GM12878 (cell line): ENCODE measurements at regions of chr15 and their contacts with region 1.

Region 1: GRCh38 chr15:44663409-44664308 is at the start of gene SPG11:
- DNase-seq: peak; percentile 99
- ATAC-seq: peak; percentile 84
- H3K4me3 ChIP-seq: peak within 1 kb of the TSS; percentile 89
- H3K27ac ChIP-seq: peak within 1 kb of the TSS; percentile 98
- H3K4me1 ChIP-seq: peaks cover 32% of the 10 kb centered on the region
- H3K27me3 ChIP-seq: no peaks in the 10 kb centered on the region
- CTCF ChIP-seq: peak; percentile 89 to 99 (median 97); a peak in 5 of 6 replicates
- EP300 ChIP-seq: no peak
- POLR2A ChIP-seq: peak; percentile 96
- RAD21 ChIP-seq: peak; percentile 81
- polyA plus RNA-seq, gene SPG11: 22.1 to 23.6 TPM

Region 2: DNA sequence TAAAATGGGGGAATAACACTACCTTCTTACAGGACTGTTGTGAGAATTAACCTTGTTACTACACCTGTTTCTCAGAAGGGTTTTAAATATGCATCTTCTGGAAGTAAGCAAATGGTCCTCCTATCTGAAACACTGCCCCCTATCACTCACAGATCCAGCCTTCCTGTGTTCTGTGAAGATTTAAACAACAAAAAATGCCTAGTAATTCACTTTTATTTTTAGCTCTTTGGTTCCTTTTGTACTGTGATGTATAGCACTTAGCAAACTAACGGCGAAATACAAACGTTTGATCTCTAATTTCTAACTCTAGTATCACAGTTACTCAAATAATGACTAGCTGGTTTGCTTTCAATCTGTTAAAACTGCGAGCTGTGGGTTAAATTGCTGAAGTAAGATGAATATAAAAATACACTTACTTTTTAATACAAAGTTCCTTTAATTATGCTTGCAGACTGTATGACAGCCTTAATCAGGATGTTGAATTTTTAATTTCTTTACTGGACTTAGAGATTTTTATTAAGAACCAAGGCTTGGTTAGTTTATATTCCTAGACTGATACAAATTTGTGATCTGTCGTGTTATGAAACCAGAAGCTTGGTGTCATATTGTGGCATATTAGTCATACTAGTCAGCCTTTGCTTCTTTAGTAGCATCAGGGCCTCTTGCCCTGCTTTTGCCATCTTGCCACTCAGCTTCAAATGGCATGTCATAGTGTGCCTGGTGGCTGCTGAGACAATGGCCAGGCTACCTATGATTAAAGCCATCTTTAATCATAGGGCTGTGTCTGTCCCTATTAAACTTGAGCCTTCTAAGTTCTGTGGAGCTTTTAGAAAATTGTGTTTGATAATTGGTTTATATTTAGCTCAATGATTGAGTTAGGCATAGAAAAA is 117.5 kb before region 1 on chr15:
- CTCF ChIA-PET with region 1: interaction called, 3 read pairs
- POLR2A ChIA-PET with region 1: interaction called, 12 read pairs
- RAD21 ChIA-PET with region 1: interaction called, 3 read pairs
- SMC1A ChIA-PET with region 1: interaction called, 4 read pairs
- in situ Hi-C with region 1: no loop called
- intact Hi-C with region 1: no loop called
- DNase-seq: peak; percentile 41
- ATAC-seq: peak; percentile 89
- H3K4me3 ChIP-seq: peak overlapping the region; percentile 23; the same call in 1 of the 2 replicates
- H3K27ac ChIP-seq: peak overlapping the region; percentile 70
- H3K4me1 ChIP-seq: peaks cover 7% of the 10 kb centered on the region
- H3K27me3 ChIP-seq: no peaks in the 10 kb centered on the region
- CTCF ChIP-seq: peak; percentile 37 to 47 (median 42); a peak in 5 of 6 replicates
- EP300 ChIP-seq: no peak
- POLR2A ChIP-seq: no peak
- RAD21 ChIP-seq: no peak

Region 3: DNA sequence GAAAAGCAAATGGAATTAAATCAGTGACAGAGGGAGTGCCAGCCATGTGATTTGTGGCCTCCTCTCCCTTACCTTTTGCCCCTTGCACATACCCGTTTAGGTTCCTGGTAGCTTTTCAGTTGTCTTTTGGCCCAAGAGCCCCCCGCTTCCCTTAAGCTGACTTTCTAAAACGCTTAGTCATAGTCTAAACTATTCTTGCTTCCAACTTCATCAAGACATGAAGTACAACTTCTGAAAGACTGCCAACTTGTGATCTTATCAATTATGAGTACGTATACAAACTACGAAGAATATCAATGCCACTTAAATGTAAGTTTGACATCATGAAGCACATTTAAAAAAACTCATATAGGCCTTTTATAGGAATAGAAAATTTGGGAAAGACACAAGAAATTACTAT is 64.8 kb before region 1 on chr15:
- CTCF ChIA-PET with region 1: interaction called, 3 read pairs
- POLR2A ChIA-PET with region 1: interaction called, 3 read pairs
- RAD21 ChIA-PET with region 1: interaction called, 6 read pairs
- SMC1A ChIA-PET with region 1: interaction called, 5 read pairs
- in situ Hi-C with region 1: no loop called
- intact Hi-C with region 1: loop called (anchors 5 kb)
- DNase-seq: no peak
- ATAC-seq: no peak
- H3K4me3 ChIP-seq: no peak overlapping the region
- H3K27ac ChIP-seq: no peak overlapping the region
- H3K4me1 ChIP-seq: peaks cover 7% of the 10 kb centered on the region; the same call in 1 of the 2 replicates
- H3K27me3 ChIP-seq: no peaks in the 10 kb centered on the region
- CTCF ChIP-seq: no peak
- EP300 ChIP-seq: no peak
- POLR2A ChIP-seq: no peak
- RAD21 ChIP-seq: no peak

Region 4: DNA sequence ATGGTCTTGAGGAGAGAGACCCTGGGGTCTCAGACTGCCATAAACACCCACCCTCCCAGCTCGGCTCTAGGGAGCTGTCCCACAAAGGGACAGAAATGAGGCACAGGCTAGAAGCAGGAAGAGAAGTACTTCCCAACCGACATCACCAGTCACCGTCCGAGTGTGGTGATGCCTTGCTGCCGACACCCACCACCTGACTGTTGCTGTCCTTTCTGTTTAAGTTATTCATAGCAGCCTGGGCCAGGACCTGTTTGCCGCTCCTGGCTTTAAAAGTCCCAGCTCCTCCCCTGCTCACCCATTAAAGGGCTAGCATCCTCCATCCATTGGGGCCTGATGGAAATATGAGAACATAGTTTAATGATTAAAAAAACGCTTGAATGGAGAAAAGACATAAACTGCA is 13.0 kb after region 1 on chr15:
- CTCF ChIA-PET with region 1: interaction called, 60 read pairs
- POLR2A ChIA-PET with region 1: interaction called, 60 read pairs
- RAD21 ChIA-PET with region 1: interaction called, 69 read pairs
- SMC1A ChIA-PET with region 1: interaction called, 73 read pairs
- in situ Hi-C with region 1: no loop called
- intact Hi-C with region 1: no loop called
- DNase-seq: no peak
- ATAC-seq: no peak
- H3K4me3 ChIP-seq: no peak overlapping the region
- H3K27ac ChIP-seq: peak overlapping the region; percentile 52; the same call in 1 of the 2 replicates
- H3K4me1 ChIP-seq: peaks cover 53% of the 10 kb centered on the region
- H3K27me3 ChIP-seq: no peaks in the 10 kb centered on the region
- CTCF ChIP-seq: no peak
- EP300 ChIP-seq: no peak
- POLR2A ChIP-seq: peak; percentile 45; the same call in 1 of the 2 replicates
- RAD21 ChIP-seq: no peak

Region 5: DNA sequence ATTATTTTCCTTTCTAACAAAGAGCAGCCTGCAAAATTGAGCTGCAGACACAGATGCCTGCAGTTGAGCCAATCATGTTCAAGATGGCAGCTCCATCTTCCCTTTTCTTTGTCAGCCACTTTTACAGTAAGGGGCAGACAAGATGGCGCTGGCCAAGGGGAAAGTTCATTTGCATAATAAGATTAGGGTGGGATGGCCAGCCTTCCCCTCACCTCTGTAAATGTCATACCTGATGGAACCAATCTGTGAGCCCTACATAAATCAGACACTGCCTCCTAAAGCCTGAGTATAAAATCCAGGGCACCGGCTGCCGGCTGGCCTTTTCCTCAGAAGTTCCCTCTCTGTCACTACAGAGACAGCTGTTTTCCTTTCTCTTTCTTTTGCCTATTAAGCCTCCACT is 31.6 kb after region 1 on chr15:
- CTCF ChIA-PET with region 1: interaction called, 7 read pairs
- POLR2A ChIA-PET with region 1: interaction called, 4 read pairs
- RAD21 ChIA-PET with region 1: interaction called, 13 read pairs
- SMC1A ChIA-PET with region 1: interaction called, 6 read pairs
- in situ Hi-C with region 1: no loop called
- intact Hi-C with region 1: no loop called
- DNase-seq: no peak
- ATAC-seq: no peak
- H3K4me3 ChIP-seq: no peak overlapping the region
- H3K27ac ChIP-seq: no peak overlapping the region
- H3K4me1 ChIP-seq: no peaks in the 10 kb centered on the region
- H3K27me3 ChIP-seq: no peaks in the 10 kb centered on the region; a peak in 1 of 4 replicates
- CTCF ChIP-seq: no peak
- EP300 ChIP-seq: no peak
- POLR2A ChIP-seq: no peak
- RAD21 ChIP-seq: no peak

Region 6: DNA sequence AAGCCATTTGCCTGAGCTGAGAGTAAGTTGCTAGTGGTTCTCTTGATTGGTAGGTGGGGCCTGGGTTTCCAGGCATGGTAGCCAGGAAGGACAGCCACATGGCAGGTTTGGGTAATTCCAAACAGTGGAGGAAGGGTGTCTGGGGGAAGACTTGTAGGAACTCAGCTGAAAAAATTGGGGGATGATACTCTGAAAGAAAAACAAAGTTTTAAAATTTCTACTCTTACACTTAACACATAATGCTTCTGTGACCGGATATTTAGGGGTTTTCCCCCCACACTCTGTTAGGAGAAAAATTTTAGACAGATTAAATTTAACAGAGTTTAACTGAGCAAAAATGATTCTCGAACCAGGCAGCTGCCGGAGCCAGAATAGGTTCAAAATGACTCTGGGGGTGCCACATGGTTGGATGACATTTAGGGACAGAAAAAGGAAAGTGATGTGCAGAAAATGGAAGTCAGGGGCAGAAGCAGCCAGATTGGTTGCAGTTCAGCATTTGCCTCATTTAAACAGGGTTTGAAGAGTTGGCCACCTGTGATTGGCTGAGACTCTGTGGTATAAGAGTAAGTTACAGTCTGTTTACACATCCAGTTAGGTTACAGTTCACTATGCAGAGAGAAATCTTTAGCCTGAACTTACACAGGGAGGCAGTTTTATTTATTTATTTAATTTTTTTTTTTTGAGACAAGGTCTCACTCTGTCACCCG is 55.8 kb after region 1 on chr15:
- CTCF ChIA-PET with region 1: interaction called, 203 read pairs
- POLR2A ChIA-PET with region 1: interaction called, 255 read pairs
- RAD21 ChIA-PET with region 1: interaction called, 231 read pairs
- SMC1A ChIA-PET with region 1: interaction called, 163 read pairs
- in situ Hi-C with region 1: loop called (anchors 5 kb)
- intact Hi-C with region 1: no loop called
- DNase-seq: peak; percentile 91
- ATAC-seq: peak; percentile 62
- H3K4me3 ChIP-seq: no peak overlapping the region
- H3K27ac ChIP-seq: peak overlapping the region; percentile 83
- H3K4me1 ChIP-seq: peaks cover 79% of the 10 kb centered on the region
- H3K27me3 ChIP-seq: no peaks in the 10 kb centered on the region
- CTCF ChIP-seq: no peak
- EP300 ChIP-seq: peak in 1 of 2 experiments; percentile 59; a peak in 1 of 4 replicates
- POLR2A ChIP-seq: peak; percentile 86
- RAD21 ChIP-seq: 0 out of 2 replicates have a peak, but pooled peaks have one; percentile 0